Activated CD4-positive, alpha-beta T cell treated with anti-CD3 and anti-CD28 coated beads, Interleukin-2, amount 10 ng/mL, durations not matched to agents 24 days and 14 days (primary cell): ENCODE measurements at regions of chr13 and their contacts with region 1.

Region 1: DNA sequence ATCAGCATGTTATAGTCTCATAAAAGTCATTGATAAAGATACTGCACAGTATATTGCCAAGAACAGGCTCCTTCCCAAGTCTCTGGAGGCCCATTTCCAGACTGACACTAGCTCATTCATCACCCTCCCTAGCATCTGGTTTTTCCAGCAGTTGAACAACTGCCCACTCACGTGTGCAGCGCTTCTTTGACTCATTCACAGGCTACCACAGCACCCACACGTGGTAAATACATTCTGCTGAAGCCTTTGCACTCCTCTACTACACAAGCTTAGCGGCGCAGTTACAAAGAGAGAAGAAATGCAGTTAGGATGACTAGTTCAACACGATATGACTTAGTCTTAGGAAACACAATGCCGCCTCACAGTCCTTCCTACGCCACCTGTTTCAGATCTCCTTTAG is 87.7 kb downstream of the DOCK9 start:
- DNase-seq: no peak
- H3K4me3 Mint-ChIP-seq: peak overlapping the region; percentile 18
- H3K27ac Mint-ChIP-seq: peak overlapping the region; percentile 17
- H3K4me1 Mint-ChIP-seq: peaks cover 20% of the 10 kb centered on the region
- H3K27me3 Mint-ChIP-seq: no peaks in the 10 kb centered on the region

Region 2: DNA sequence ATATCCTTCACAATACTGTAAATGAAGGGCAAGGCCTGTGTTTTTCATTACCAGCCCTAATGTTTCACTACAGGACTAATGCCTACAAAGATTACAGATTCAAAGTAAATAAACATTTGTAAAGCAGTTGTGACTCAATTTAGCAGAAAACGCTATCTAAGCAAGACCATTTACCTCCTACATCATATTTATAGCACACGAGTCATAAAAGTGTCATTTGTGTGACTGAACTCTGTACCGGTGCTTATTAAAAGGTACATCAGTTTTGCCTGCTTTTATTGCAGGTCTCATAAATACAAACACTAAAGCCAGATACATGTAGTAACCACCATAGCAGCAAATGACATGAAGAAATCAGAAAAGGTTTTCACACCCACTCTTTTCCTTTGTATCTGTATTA is 76.2 kb before region 1 on chr13:
- intact Hi-C with region 1: no loop called
- DNase-seq: no peak
- H3K4me3 Mint-ChIP-seq: no peak overlapping the region
- H3K27ac Mint-ChIP-seq: no peak overlapping the region
- H3K4me1 Mint-ChIP-seq: peaks cover 2% of the 10 kb centered on the region
- H3K27me3 Mint-ChIP-seq: no peaks in the 10 kb centered on the region

Region 3: DNA sequence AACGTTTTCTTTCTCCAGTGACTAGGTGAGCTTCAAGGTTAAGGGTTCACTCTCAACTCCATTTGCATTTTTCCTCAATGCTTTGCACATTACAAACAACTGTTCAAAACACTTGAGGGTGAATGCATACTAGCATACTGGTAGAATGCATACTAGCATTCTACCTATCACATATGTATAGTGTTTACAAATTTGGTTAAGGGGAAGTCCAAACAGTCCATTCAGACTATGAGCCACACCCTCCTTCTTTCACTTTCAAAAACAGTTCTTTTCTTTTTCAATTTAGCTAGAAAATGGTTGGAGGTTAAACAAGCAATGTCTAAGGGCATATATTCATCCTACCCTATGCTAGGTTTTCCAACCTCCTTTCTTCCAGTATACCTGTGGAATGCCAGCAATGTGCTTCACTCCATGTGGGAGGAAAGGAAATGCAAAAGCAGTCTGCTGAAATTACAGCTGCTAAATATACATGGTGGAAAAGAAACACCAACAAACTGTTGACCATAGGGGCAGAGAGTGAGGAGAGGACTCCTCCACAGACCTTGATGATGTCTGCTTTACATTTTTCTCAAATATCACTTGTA is 14.9 kb before region 1 on chr13:
- intact Hi-C with region 1: loop called (anchors 1 kb)
- DNase-seq: no peak
- H3K4me3 Mint-ChIP-seq: peak overlapping the region; percentile 70
- H3K27ac Mint-ChIP-seq: peak overlapping the region; percentile 93
- H3K4me1 Mint-ChIP-seq: peaks cover 31% of the 10 kb centered on the region
- H3K27me3 Mint-ChIP-seq: no peaks in the 10 kb centered on the region

Region 4: DNA sequence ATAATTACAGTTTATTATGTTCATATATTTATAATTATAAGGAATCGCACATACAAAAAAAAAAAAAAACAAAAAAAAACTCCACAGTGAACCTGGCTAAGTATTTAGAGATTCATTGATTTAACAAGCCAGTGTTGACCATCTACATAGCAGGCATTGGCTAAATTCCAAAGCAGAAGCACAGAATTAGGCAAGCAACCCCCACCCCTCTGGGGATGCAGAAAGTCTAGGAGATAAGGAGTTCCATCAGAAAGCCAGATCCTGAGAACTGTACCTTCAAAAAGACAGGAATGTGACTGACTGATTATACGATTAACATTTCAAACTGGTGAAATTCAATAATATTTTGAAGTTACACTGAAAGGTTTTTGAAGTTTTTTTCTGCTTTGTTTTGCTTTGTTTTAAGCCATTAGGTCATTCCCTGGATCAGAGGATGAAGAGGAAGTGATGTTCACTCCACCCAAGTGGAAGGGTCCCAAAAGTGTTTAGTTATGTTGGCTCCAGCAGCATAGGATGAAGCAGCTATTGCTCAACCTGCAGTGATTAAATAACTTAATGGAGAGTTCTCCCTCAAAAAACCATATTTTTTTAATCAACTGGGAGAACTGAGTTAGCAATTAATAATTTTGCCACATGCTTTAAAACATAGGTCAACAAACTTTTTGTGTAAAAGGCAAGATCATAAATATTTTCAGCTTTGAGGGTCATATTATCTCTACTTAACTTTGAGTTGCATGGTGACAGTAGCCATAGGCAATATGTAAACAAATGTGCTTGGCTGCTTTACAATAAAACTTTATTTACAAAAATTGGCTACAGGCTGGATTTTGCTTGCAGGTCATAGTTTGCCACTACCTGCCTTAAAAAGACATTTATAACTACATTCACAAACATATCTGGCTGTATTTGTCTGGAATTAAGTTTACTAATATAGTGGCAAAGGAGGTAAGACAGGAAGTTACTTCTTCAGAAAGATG is 38.1 kb after region 1 on chr13:
- intact Hi-C with region 1: loop called (anchors 5 kb)
- DNase-seq: no peak
- H3K4me3 Mint-ChIP-seq: no peak overlapping the region
- H3K27ac Mint-ChIP-seq: no peak overlapping the region
- H3K4me1 Mint-ChIP-seq: peaks cover 9% of the 10 kb centered on the region
- H3K27me3 Mint-ChIP-seq: no peaks in the 10 kb centered on the region

Region 5: DNA sequence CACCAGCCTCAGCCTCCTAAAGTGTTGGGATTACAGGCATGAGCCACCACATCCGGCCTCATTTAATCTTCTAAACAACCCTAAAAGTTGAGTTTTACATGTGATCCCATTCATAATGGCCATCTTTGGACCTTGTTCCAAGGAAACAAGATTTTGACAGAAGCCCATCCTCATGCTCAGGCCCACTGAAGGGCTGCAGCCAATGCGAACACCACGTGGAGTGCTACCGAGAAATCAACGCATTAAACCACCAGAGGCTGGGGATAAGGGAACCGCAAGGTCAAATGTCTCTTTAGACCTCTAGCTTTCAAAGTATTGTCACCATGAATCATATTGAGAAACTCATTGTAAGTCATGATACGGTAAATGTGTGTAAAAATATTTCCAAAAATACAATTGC is 137.1 kb after region 1 on chr13:
- intact Hi-C with region 1: loop called (anchors 2 kb)
- DNase-seq: peak; percentile 70
- H3K4me3 Mint-ChIP-seq: peak overlapping the region; percentile 65
- H3K27ac Mint-ChIP-seq: peak overlapping the region; percentile 95
- H3K4me1 Mint-ChIP-seq: peaks cover 63% of the 10 kb centered on the region
- H3K27me3 Mint-ChIP-seq: no peaks in the 10 kb centered on the region